ENCODE measurements at regions of chr5 and their contacts with region 1.

Region 1: DNA sequence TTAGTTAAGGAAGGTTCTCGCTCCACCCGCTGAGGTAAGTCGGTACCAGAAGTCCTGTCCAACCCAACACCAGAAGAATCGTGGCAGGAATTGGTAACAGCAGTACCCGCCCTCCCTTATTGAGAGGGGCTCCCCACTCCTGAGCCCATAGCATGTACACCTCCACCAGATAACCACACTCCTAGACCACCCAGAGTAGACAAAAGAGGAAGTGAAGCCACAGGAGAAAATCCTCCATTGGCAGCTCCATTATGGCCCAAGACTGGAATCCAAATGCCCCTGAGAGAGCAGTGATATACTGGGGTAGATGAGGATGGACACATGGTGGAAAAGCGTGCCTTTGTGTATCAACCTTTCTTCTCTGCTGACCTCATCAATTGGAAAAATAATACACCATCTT is 106.1 kb upstream of the EPB41L4A start:
- DNase-seq: no peak
- ATAC-seq: no peak
- H3K4me3 ChIP-seq: no peak overlapping the region
- H3K4me3 Mint-ChIP-seq: no peak overlapping the region
- H3K27ac ChIP-seq: no peak overlapping the region
- H3K27ac Mint-ChIP-seq: no peak overlapping the region
- H3K4me1 ChIP-seq: no peaks in the 10 kb centered on the region
- H3K4me1 Mint-ChIP-seq: no peaks in the 10 kb centered on the region
- H3K27me3 ChIP-seq: peaks cover 2 to 8% of the 10 kb centered on the region in 2 experiments
- H3K27me3 Mint-ChIP-seq: peaks cover 49% of the 10 kb centered on the region
- CTCF ChIP-seq: no peak

Region 2: GRCh38 chr5:111618623-111619271 is 906.5 kb before region 1 on chr5:
- CTCF ChIA-PET with region 1: no interaction called
- POLR2A ChIA-PET with region 1: no interaction called
- intact Hi-C with region 1: no loop called
- DNase-seq: no peak
- ATAC-seq: no peak
- H3K4me3 ChIP-seq: no peak overlapping the region
- H3K4me3 Mint-ChIP-seq: no peak overlapping the region
- H3K27ac ChIP-seq: no peak overlapping the region
- H3K27ac Mint-ChIP-seq: no peak overlapping the region
- H3K4me1 ChIP-seq: no peaks in the 10 kb centered on the region
- H3K4me1 Mint-ChIP-seq: no peaks in the 10 kb centered on the region
- H3K27me3 ChIP-seq: peaks cover 0 to 4% of the 10 kb centered on the region in 2 experiments
- H3K27me3 Mint-ChIP-seq: peaks cover 4% of the 10 kb centered on the region
- CTCF ChIP-seq: no peak

Region 3: GRCh38 chr5:112511920-112512319 is 13.3 kb before region 1 on chr5:
- CTCF ChIA-PET with region 1: no interaction called
- POLR2A ChIA-PET with region 1: no interaction called
- intact Hi-C with region 1: loop called in 1 of 2 experiments (anchors 1 kb)
- DNase-seq: no peak
- ATAC-seq: no peak
- H3K4me3 ChIP-seq: no peak overlapping the region
- H3K4me3 Mint-ChIP-seq: no peak overlapping the region
- H3K27ac ChIP-seq: no peak overlapping the region
- H3K27ac Mint-ChIP-seq: no peak overlapping the region
- H3K4me1 ChIP-seq: no peaks in the 10 kb centered on the region
- H3K4me1 Mint-ChIP-seq: no peaks in the 10 kb centered on the region
- H3K27me3 ChIP-seq: no peaks in the 10 kb centered on the region
- H3K27me3 Mint-ChIP-seq: no peaks in the 10 kb centered on the region
- CTCF ChIP-seq: no peak